ENCODE measurements at regions of chr11 and their contacts with region 1.

Region 1: GRCh38 chr11:133821776-133822175 is 23.5 kb downstream of the SPATA19 start:
- DNase-seq: peak; percentile 83
- ATAC-seq: peak; percentile 93
- H3K4me3 Mint-ChIP-seq: no peak overlapping the region
- H3K27ac Mint-ChIP-seq: no peak overlapping the region
- H3K4me1 Mint-ChIP-seq: peaks cover 6% of the 10 kb centered on the region
- H3K27me3 Mint-ChIP-seq: no peaks in the 10 kb centered on the region; the same call in 1 of the 2 replicates
- CTCF ChIP-seq: peak; percentile 81

Region 2: DNA sequence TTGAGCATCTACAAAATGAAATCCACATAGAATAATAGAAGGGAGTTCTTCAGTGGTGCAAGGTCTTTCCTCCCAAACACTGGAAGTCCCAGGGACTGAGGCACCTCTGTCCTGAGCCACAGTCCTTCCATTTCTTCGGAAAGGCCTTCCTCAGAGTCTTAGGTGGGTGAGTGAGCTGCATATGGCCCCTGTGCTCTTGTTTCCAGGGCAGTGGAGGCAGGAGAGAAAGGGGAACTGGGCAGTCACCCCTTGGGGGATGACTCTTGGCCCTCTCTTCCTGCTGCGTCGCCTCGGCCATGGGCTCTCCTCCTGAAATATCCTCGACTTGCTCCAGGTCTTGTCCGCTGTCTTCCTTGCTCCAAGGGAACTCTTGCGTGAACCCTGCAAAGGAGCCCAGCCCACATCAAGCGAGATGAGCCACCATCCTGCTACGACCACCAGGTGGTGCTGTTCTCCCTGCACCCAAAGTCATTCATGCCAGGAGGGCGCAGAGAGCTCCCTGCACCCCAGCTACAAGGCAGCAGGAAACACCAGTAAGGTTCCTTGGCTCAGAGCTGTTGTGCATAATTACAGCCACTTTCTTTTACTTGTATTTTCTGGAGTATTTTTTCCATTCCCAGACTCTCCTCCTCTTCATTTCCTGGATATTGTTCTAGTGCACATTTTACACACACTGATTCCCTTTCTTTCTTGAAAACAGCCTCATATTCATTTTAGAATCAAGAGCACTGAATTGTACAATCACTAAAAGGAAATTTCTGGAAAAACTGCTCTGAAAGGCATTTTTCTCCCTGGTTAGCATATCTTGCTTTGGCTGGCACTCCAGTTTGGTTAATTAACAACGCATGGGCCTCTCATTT is 687.2 kb before region 1 on chr11:
- CTCF ChIA-PET with region 1: interaction called, 21 read pairs
- POLR2A ChIA-PET with region 1: no interaction called
- DNase-seq: peak; percentile 84
- ATAC-seq: peak; percentile 97
- H3K4me3 Mint-ChIP-seq: no peak overlapping the region
- H3K27ac Mint-ChIP-seq: no peak overlapping the region
- H3K4me1 Mint-ChIP-seq: peaks cover 30% of the 10 kb centered on the region
- H3K27me3 Mint-ChIP-seq: no peaks in the 10 kb centered on the region
- CTCF ChIP-seq: peak; percentile 92

Region 3: GRCh38 chr11:133531971-133532651 is 289.7 kb before region 1 on chr11 and contains the start of gene OPCML:
- CTCF ChIA-PET with region 1: interaction called, 10 read pairs
- POLR2A ChIA-PET with region 1: no interaction called
- DNase-seq: peak; percentile 26
- ATAC-seq: peak; percentile 41
- H3K4me3 Mint-ChIP-seq: peak within 1 kb of the TSS; percentile 85
- H3K27ac Mint-ChIP-seq: 0 out of 2 replicates have a peak within 1 kb of the TSS, but pooled peaks have one; percentile 4
- H3K4me1 Mint-ChIP-seq: peaks cover 75% of the 10 kb centered on the region
- H3K27me3 Mint-ChIP-seq: peaks cover 30% of the 10 kb centered on the region
- CTCF ChIP-seq: no peak
- total RNA-seq, gene OPCML: 1.5 to 1.8 TPM (median 1.7 TPM) in 3 replicates

Region 4: DNA sequence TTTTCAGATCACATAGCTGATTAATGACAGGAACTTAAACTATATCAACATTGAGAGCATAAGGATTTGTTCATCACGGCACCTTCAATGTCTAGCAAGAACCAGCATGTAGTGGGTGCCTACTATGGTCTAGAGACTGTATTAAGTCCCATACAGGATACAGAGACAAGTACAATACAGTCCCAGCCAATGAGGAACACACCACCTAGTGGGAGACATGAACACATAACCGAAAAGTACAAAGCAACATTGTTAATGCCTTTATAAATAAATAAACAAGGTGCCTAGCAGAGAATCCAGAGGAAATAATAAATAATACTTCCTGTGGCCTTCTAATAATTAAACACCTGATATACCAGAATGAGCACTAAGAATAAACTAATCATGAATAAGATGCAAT is 201.8 kb before region 1 on chr11:
- CTCF ChIA-PET with region 1: interaction called, 53 read pairs
- POLR2A ChIA-PET with region 1: no interaction called
- DNase-seq: no peak
- ATAC-seq: no peak; the same call in 1 of the 2 replicates
- H3K4me3 Mint-ChIP-seq: no peak overlapping the region
- H3K27ac Mint-ChIP-seq: no peak overlapping the region
- H3K4me1 Mint-ChIP-seq: peaks cover 9% of the 10 kb centered on the region
- H3K27me3 Mint-ChIP-seq: no peaks in the 10 kb centered on the region
- CTCF ChIP-seq: no peak

Region 5: DNA sequence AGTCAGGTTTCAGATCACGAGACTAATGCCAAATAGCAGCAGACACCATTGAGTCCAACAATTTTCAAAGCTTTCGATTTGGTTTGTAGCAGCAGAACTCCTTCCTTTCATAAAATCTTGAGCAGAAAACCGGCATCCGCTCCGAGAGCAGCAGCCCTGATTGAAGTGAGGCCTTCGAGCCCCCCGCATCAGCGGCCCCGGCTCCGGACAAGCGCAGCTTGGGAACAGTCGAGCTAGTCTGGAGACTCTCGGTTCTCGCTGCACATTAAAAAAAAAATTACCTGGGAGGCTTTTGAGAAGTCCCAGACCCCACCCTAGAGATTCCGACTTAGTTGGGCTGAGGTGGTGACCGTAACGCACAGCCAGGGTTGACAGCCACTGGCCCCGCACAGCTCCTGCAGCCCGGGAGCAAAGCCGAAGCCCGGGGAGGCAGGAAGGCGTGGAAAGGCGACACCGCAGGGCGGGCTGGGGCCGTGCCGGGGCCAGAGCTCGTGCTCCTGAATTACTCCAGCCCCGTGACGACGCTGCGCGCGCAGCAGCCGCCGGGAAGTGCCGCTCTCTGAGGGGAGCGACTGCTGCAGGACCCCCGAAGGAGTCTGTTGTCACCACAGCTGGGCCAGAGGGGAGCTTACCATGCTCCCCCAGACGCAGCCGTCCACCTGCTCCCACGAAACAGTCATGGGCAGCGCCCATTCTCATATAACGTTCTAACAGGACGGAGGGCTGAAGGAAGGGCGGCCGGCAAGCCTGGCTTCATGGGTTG is 34.2 kb before region 1 on chr11:
- CTCF ChIA-PET with region 1: interaction called, 23 read pairs
- POLR2A ChIA-PET with region 1: no interaction called
- DNase-seq: peak; percentile 78
- ATAC-seq: peak; percentile 96
- H3K4me3 Mint-ChIP-seq: peak overlapping the region; percentile 62
- H3K27ac Mint-ChIP-seq: no peak overlapping the region
- H3K4me1 Mint-ChIP-seq: peaks cover 14% of the 10 kb centered on the region
- H3K27me3 Mint-ChIP-seq: peaks cover 30% of the 10 kb centered on the region
- CTCF ChIP-seq: no peak

Region 6: DNA sequence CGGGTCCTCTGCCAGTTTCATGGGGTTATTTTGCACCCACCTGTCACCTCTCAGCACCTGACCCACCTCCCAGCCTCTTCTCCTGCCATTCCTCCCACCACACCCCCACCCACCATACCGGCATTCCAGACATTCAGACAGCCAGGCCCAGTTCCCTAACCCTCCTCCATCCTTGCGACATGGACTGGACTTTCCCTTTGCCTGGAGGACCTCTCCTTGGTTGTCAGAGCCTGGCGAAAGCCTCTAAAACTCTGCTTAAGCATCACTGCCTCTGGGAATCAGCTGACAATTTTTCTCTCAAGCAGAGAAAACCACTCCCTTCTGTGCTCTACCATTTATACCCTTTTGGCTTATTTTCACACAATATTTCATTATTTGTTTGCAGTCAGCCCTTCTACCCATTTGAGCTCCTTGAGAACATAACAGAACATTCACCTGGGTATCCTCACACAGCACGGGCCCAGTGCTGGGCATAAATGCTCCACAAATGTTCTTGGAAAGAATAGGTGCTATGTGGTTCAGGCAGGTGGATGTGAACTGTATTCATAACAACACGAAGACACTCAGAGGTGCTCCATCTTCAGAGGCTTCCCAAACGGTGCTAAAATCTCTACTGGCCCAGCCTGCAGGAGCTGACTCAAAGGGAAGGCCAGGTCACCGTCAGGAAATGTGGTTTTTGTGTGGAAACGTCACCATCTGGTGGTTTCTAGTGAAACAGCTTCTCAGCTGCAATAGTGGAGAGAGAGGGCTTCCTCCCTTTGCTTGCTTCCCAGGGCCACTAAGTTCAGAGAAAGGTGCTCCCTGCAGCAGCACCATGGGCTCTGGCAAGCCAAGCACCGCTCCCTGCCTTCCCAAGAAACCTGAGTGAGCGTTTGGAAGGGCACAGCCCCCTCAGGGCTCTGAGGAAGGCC is 13.2 kb after region 1 on chr11:
- CTCF ChIA-PET with region 1: interaction called, 29 read pairs
- POLR2A ChIA-PET with region 1: no interaction called
- DNase-seq: peak; percentile 72
- ATAC-seq: peak; percentile 84
- H3K4me3 Mint-ChIP-seq: no peak overlapping the region
- H3K27ac Mint-ChIP-seq: 0 out of 2 replicates have a peak overlapping the region, but pooled peaks have one; percentile 0
- H3K4me1 Mint-ChIP-seq: peaks cover 19% of the 10 kb centered on the region
- H3K27me3 Mint-ChIP-seq: no peaks in the 10 kb centered on the region; the same call in 1 of the 2 replicates
- CTCF ChIP-seq: peak; percentile 60

Region 7: GRCh38 chr11:133966921-133967598 is 145.3 kb after region 1 on chr11:
- CTCF ChIA-PET with region 1: no interaction called
- POLR2A ChIA-PET with region 1: no interaction called
- DNase-seq: peak; percentile 85
- ATAC-seq: peak; percentile 83
- H3K4me3 Mint-ChIP-seq: no peak overlapping the region
- H3K27ac Mint-ChIP-seq: peak overlapping the region; percentile 69; the same call in 1 of the 2 replicates
- H3K4me1 Mint-ChIP-seq: peaks cover 7% of the 10 kb centered on the region
- H3K27me3 Mint-ChIP-seq: peaks cover 5% of the 10 kb centered on the region
- CTCF ChIP-seq: 0 out of 2 replicates have a peak, but pooled peaks have one; percentile 15

Measured in WTC11 (cell line).